PC-9 (cell line): ENCODE measurements at regions of chr2 and their contacts with region 1.

Region 1: DNA sequence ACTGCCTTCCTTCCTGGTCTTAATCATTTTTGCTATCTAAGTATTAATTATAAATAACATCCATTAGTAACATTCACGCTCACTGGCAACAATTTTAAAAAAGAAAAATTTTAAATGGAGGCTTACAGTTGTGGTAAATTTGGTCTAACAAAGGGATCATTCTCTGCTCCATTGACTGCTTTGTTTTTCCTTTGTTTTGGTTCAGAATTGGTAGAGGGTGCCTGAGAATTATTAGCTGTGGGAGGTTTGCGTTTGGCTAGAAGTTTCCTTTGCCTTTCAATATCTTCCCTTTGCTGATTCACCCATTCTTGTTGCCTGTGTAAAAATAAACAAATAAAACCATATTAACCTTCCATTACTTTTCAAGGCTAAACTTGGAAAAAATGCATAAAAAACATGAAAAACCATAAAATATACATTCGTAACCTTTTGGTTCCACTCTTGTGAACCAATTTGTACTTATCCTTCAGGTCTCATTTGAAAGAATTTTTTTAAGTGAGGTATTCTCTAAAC is 114.6 kb downstream of the TLK1 start:
- DNase-seq: no peak
- H3K4me3 ChIP-seq: no peak overlapping the region
- H3K27ac ChIP-seq: no peak overlapping the region
- H3K4me1 ChIP-seq: no peaks in the 10 kb centered on the region
- H3K27me3 ChIP-seq: no peaks in the 10 kb centered on the region
- CTCF ChIP-seq: no peak

Region 2: GRCh38 chr2:170873035-170873692 is 172.9 kb before region 1 on chr2:
- CTCF ChIA-PET with region 1: no interaction called
- POLR2A ChIA-PET with region 1: no interaction called
- intact Hi-C with region 1: no loop called
- DNase-seq: peak; percentile 52 to 77
- H3K4me3 ChIP-seq: peak overlapping the region; percentile 18; the same call in 1 of the 2 replicates
- H3K27ac ChIP-seq: no peak overlapping the region
- H3K4me1 ChIP-seq: no peaks in the 10 kb centered on the region
- H3K27me3 ChIP-seq: peaks cover 3% of the 10 kb centered on the region
- CTCF ChIP-seq: peak; percentile 93

Region 3: DNA sequence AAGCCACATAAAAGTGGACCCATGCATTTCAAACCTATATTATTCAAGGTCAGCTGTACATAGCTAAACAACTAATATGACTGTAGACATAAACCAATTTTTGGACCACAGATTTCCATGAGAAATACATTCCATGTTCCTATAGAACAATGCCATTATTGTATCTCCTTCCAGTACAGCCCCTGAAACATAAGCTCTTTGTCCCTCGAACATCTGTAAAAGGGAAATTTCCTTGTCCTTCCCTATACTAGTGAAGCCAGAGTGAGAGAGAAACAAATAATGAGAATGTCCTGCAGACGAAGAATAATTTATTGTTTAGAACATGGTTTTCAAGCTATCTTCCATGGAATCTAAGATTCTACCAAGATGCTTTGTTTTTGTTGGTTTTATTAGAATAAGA is 41.7 kb before region 1 on chr2:
- CTCF ChIA-PET with region 1: no interaction called
- POLR2A ChIA-PET with region 1: no interaction called
- intact Hi-C with region 1: no loop called
- DNase-seq: no peak
- H3K4me3 ChIP-seq: no peak overlapping the region
- H3K27ac ChIP-seq: no peak overlapping the region
- H3K4me1 ChIP-seq: no peaks in the 10 kb centered on the region
- H3K27me3 ChIP-seq: no peaks in the 10 kb centered on the region
- CTCF ChIP-seq: no peak

Region 4: DNA sequence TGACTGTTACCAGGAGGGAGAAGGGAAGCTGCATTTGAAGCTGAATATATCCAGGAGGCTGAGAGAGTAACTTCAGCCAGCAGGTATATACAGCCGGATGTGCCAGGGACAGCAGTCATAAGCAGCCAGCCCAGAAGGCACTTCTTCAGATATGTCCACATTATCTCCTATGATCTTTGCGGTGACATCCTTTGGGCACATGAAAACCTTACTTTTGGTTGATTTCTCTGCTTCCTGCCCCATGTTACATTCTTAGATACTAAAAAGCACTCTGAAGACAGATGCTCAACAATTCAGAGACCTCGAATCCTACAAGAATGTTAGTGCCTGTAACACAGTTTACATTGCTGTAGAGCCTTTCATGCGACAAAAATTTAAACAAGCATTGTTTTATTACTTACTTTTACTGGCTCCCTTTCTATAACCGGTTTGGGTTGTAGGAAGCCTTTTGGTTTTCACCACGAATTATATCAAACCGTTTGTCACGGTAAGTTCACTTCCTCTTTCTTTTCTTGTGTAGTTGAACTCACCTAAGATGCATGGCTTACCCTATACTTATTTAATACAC is 164.8 kb after region 1 on chr2:
- CTCF ChIA-PET with region 1: no interaction called
- POLR2A ChIA-PET with region 1: no interaction called
- intact Hi-C with region 1: no loop called
- DNase-seq: no peak
- H3K4me3 ChIP-seq: no peak overlapping the region
- H3K27ac ChIP-seq: no peak overlapping the region
- H3K4me1 ChIP-seq: no peaks in the 10 kb centered on the region
- H3K27me3 ChIP-seq: no peaks in the 10 kb centered on the region
- CTCF ChIP-seq: no peak

Region 5: GRCh38 chr2:171416009-171416926 is 370.2 kb after region 1 on chr2:
- CTCF ChIA-PET with region 1: no interaction called
- POLR2A ChIA-PET with region 1: no interaction called
- intact Hi-C with region 1: loop called (anchors 5 kb)
- DNase-seq: peak; percentile 79 to 85
- H3K4me3 ChIP-seq: no peak overlapping the region
- H3K27ac ChIP-seq: no peak overlapping the region
- H3K4me1 ChIP-seq: peaks cover 10% of the 10 kb centered on the region; the same call in 1 of the 2 replicates
- H3K27me3 ChIP-seq: no peaks in the 10 kb centered on the region
- CTCF ChIP-seq: peak; percentile 90